ENCODE measurements at regions of chr3 and their contacts with region 1.

Region 1: GRCh38 chr3:169812332-169813235 is at the starts of genes LRRC34 and LRRIQ4:
- DNase-seq: peak; percentile 87
- H3K4me3 ChIP-seq: peak within 1 kb of the TSS; percentile 55 to 71
- H3K27ac ChIP-seq: peak within 1 kb of the TSS; percentile 54 to 91
- H3K4me1 ChIP-seq: peaks cover 0 to 11% of the 10 kb centered on the region in 2 experiments; a peak in 2 of 4 replicates
- H3K27me3 ChIP-seq: no peaks in the 10 kb centered on the region
- CTCF ChIP-seq: no peak
- EP300 ChIP-seq: no peak
- RAD21 ChIP-seq: no peak
- polyA plus RNA-seq, gene LRRC34: 1.6 and 2.6 TPM in 2 replicates
- polyA plus RNA-seq, gene LRRIQ4: not detected in 2 replicates

Region 2: DNA sequence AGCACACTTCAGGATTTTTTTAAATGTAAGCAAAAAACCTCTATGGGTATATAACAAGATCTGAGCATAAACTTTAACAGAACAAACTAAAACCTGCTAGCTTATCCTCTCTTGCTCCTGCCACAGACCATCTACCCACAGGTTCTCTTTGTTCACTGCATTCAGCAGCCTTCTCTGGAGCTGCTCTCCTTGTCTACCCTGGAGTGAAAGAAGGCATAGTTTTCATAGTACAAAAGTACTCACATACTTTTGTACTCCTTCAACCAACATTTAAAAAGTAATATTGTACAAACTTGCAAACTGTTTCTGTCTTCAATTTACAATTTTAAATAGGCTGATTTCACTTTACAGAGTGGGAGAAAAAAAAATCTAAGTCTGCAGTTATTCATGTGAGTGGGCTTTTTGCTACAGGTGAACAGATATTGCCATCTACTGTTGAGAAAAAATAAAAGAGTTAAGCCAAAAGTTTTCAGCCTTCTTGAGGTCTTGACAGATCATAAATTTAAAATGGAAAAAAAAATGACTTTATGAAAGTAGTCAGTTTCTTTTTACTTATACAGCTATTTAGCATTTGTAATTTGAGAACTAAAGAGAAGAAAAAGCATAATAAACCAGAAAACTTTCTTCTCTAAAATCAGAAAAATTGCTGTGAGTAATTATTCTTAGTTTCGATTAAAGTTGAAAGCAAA is 68.1 kb before region 1 on chr3:
- CTCF ChIA-PET with region 1: no interaction called
- POLR2A ChIA-PET with region 1: no interaction called
- DNase-seq: no peak
- H3K4me3 ChIP-seq: no peak overlapping the region
- H3K27ac ChIP-seq: no peak overlapping the region
- H3K4me1 ChIP-seq: no peaks in the 10 kb centered on the region
- H3K27me3 ChIP-seq: peaks cover 5% of the 10 kb centered on the region; the same call in 1 of the 2 replicates
- CTCF ChIP-seq: peak; percentile 55
- EP300 ChIP-seq: no peak
- RAD21 ChIP-seq: peak; percentile 66

Region 3: DNA sequence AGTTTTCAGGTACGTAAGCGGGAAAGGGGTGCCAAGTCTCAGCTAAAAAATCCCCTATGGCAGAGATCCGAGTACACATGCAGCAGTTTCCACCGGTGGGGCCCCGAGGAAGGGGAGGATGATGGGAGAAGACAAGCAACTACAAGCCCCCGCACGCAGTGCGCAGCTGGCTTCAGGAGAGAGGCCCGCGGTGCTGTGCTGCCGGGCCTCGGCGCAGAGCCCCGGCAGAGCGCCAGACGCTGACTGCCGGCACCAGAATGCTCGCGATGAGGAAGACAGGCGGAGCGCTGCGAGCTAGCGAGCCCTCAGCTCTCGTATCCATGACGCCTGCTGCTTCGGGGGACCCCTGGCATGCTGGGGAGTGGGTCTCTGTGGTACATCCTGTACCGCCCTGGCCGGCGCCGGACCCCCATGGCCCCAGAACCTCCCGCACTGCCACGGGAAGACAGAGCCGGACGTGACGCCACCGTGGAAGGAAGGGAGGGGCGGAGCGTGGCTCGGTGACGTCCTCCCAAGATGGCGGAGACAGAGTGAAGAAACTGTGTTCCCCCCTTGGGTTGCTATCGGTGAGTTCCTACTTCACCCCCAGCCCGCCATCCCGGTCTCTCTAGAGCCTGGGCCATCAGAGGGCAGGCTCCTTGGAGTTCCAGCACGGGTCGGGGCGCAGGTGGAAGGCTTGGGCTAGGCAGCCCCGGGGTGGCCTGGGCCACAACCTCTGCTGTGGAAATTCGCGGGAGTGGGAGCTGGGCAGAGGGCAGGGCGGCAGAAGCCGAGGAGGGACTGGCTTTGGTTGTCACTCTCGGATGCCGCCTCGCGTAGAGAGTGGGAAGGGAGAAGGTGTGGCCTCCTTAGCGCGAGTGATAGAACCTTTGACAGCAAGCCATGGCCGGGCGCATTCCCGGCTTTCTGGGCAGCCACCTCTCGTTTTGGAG is 39.4 kb before region 1 on chr3 and contains the start of gene MYNN:
- CTCF ChIA-PET with region 1: no interaction called
- POLR2A ChIA-PET with region 1: interaction called, 13 read pairs
- DNase-seq: peak; percentile 85
- H3K4me3 ChIP-seq: peak within 1 kb of the TSS; percentile 100
- H3K27ac ChIP-seq: peak within 1 kb of the TSS; percentile 96 to 99
- H3K4me1 ChIP-seq: peaks cover 4 to 10% of the 10 kb centered on the region in 2 experiments; a peak in 3 of 4 replicates
- H3K27me3 ChIP-seq: no peaks in the 10 kb centered on the region
- CTCF ChIP-seq: no peak; the same call in 1 of the 2 replicates
- EP300 ChIP-seq: no peak
- RAD21 ChIP-seq: no peak; the same call in 1 of the 2 replicates
- polyA plus RNA-seq, gene MYNN: 9.7 and 11.2 TPM in 2 replicates